ENCODE measurements at regions of chr1 and their contacts with region 1.

Region 1: DNA sequence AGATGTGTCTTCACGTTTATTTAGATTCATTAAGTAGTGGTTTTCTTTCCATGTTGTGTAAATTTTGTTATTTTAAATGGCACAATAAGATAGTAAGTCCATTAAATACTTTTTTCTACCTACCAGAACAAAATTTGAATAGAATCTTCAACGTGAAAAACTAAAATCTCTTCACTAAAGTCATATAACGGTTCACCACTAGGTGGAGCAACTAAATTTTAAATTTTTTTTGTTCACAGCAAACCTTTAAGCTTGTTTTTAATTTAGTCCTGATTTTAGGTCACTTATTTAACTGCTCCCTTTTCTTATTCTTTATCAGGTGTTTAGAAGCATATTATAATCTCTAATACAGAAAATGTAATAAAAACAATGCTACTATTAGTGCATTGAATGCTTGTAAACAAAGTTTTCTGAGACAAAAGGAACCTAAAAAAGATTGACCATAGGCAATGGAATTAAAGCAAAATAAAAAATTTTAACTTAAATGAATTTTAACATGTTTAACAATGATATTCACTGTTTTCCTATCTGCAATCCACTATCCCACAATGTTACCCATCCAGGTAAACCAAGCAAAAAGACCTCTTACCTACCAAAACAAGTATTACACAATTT is 28.3 kb upstream of the PKN2 start:
- DNase-seq: no peak
- ATAC-seq: no peak
- H3K4me3 ChIP-seq: no peak overlapping the region
- H3K27ac ChIP-seq: no peak overlapping the region
- H3K4me1 ChIP-seq: peaks cover 0 to under 1% (median 0%) of the 10 kb centered on the region in 12 donors
- H3K27me3 ChIP-seq: no peaks in the 10 kb centered on the region
- CTCF ChIP-seq: peak; percentile 55 to 75 (median 70)
- POLR2A ChIP-seq: no peak

Region 2: GRCh38 chr1:88683541-88684481 is 28.0 kb after region 1 on chr1 and contains the start of gene PKN2:
- intact Hi-C with region 1: loop called in 1 of 10 experiments (anchors 1 kb)
- DNase-seq: peak; percentile 98 to 99 (median 98)
- ATAC-seq: peak; percentile 99 to 100 (median 99)
- H3K4me3 ChIP-seq: peak within 1 kb of the TSS; percentile 70 to 91 (median 86)
- H3K27ac ChIP-seq: peak within 1 kb of the TSS; percentile 86 to 96 (median 94)
- H3K4me1 ChIP-seq: peaks cover 0 to 41% (median 27%) of the 10 kb centered on the region in 12 donors
- H3K27me3 ChIP-seq: no peaks in the 10 kb centered on the region
- CTCF ChIP-seq: peak in 11 of 12 donors; percentile 6 to 58 (median 20)
- POLR2A ChIP-seq: peak; percentile 34 to 90
- total RNA-seq, gene PKN2: 20.3 to 43.8 (median 34.3) TPM

Region 3: DNA sequence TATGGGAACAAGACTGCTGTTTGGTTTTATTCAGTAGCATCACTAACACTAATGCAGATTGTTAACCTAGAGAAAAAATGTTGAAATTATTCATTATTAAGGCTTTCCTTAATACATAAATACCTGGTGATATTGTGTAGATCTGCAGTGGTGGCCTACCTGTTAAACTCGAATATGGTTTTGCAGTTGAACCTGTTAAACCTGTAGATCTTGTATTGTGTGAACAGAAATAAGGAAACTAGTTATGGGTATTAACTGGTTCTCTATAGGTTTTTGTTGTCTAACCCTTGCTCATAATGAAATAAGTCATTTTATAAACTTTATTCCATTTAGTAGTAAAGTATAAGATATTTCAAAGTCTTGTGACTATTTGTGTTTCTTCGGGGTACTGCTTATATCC is 52.2 kb after region 1 on chr1:
- intact Hi-C with region 1: loop called in 1 of 10 experiments (anchors 2 kb)
- DNase-seq: no peak
- ATAC-seq: no peak
- H3K4me3 ChIP-seq: no peak overlapping the region
- H3K27ac ChIP-seq: no peak overlapping the region
- H3K4me1 ChIP-seq: peaks cover 0 to 10% (median 0%) of the 10 kb centered on the region in 12 donors
- H3K27me3 ChIP-seq: no peaks in the 10 kb centered on the region
- CTCF ChIP-seq: no peak
- POLR2A ChIP-seq: no peak

Region 4: GRCh38 chr1:88800382-88801051 is 144.7 kb after region 1 on chr1:
- intact Hi-C with region 1: loop called in 1 of 10 experiments (anchors 10 kb)
- DNase-seq: peak in 1 of 5 donors; percentile 9
- ATAC-seq: no peak
- H3K4me3 ChIP-seq: no peak overlapping the region
- H3K27ac ChIP-seq: no peak overlapping the region
- H3K4me1 ChIP-seq: peaks cover 0 to 9% (median 0%) of the 10 kb centered on the region in 12 donors
- H3K27me3 ChIP-seq: no peaks in the 10 kb centered on the region
- CTCF ChIP-seq: peak; percentile 42 to 72 (median 54)
- POLR2A ChIP-seq: no peak

Region 5: GRCh38 chr1:88877382-88877825 is 221.6 kb after region 1 on chr1:
- intact Hi-C with region 1: loop called in 9 of 10 experiments (anchors 2 to 5 kb)
- DNase-seq: no peak
- ATAC-seq: no peak
- H3K4me3 ChIP-seq: no peak overlapping the region
- H3K27ac ChIP-seq: no peak overlapping the region
- H3K4me1 ChIP-seq: peaks cover 0 to 51% (median 16%) of the 10 kb centered on the region in 12 donors
- H3K27me3 ChIP-seq: no peaks in the 10 kb centered on the region
- CTCF ChIP-seq: peak; percentile 45 to 76 (median 64)
- POLR2A ChIP-seq: no peak

Measured in heart left ventricle (tissue), 16 donors.